ENCODE measurements at regions of chr12 and their contacts with region 1.

Region 1: GRCh38 chr12:121712461-121713256 is at the start of gene TMEM120B:
- DNase-seq: peak; percentile 98
- H3K4me3 ChIP-seq: peak within 1 kb of the TSS; percentile 76 to 97
- H3K27ac ChIP-seq: peak within 1 kb of the TSS; percentile 64 to 72; a peak in 3 of 4 replicates
- H3K4me1 ChIP-seq: peaks cover 6 to 8% of the 10 kb centered on the region in 2 experiments; a peak in 2 of 4 replicates
- H3K27me3 ChIP-seq: no peaks in the 10 kb centered on the region
- CTCF ChIP-seq: peak; percentile 24; the same call in 1 of the 2 replicates
- EP300 ChIP-seq: no peak
- RAD21 ChIP-seq: no peak
- polyA plus RNA-seq, gene TMEM120B: 15.1 and 15.4 TPM in 2 replicates

Region 2: DNA sequence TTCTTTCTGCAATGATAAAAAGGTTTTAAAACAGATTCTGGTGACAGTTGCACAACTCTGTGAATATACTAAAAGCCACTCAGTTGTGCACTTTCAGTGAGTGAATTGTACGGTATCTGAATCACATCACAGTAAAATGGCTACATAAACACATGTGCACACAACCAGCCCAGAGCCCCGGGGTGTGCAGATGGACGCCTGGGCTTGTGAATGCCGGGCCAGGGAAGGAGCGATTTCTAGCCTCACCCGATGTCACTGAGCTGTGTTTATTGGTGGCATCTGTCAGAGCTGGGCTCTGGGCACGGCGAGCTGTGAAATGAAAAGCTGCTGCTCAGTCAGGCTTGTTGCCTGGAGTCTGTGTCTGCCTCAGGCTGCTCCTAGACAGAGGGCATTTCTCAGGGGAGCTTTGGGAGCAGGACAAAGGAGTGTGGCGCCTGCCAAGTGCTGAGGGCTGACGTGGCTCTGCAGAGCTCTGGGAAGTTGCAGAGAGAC is 54.9 kb after region 1 on chr12:
- CTCF ChIA-PET with region 1: interaction called, 10 read pairs
- POLR2A ChIA-PET with region 1: interaction called, 15 read pairs
- DNase-seq: peak; percentile 94
- H3K4me3 ChIP-seq: no peak overlapping the region
- H3K27ac ChIP-seq: peak overlapping the region; percentile 70 to 90
- H3K4me1 ChIP-seq: peaks cover 17 to 24% of the 10 kb centered on the region in 2 experiments; a peak in 1 of 4 replicates
- H3K27me3 ChIP-seq: no peaks in the 10 kb centered on the region
- CTCF ChIP-seq: no peak
- EP300 ChIP-seq: peak in 1 of 2 experiments; percentile 75; a peak in 1 of 4 replicates
- RAD21 ChIP-seq: peak; percentile 1; the same call in 1 of the 2 replicates

Region 3: GRCh38 chr12:121773011-121773777 is 60.5 kb after region 1 on chr12:
- CTCF ChIA-PET with region 1: interaction called, 10 read pairs
- POLR2A ChIA-PET with region 1: interaction called, 15 read pairs
- DNase-seq: peak; percentile 91
- H3K4me3 ChIP-seq: no peak overlapping the region; a peak in 1 of 4 replicates
- H3K27ac ChIP-seq: peak overlapping the region in 1 of 2 experiments; percentile 45; a peak in 1 of 4 replicates
- H3K4me1 ChIP-seq: peaks cover 0 to 12% of the 10 kb centered on the region in 2 experiments; a peak in 1 of 4 replicates
- H3K27me3 ChIP-seq: no peaks in the 10 kb centered on the region
- CTCF ChIP-seq: peak; percentile 89
- EP300 ChIP-seq: 0 out of 4 replicates have a peak, but pooled peaks of 1 of the 2 experiments have one; percentile 12
- RAD21 ChIP-seq: peak; percentile 88

Measured in SK-N-SH (cell line).